ENCODE measurements at regions of chr2 and their contacts with region 1.

Region 1: DNA sequence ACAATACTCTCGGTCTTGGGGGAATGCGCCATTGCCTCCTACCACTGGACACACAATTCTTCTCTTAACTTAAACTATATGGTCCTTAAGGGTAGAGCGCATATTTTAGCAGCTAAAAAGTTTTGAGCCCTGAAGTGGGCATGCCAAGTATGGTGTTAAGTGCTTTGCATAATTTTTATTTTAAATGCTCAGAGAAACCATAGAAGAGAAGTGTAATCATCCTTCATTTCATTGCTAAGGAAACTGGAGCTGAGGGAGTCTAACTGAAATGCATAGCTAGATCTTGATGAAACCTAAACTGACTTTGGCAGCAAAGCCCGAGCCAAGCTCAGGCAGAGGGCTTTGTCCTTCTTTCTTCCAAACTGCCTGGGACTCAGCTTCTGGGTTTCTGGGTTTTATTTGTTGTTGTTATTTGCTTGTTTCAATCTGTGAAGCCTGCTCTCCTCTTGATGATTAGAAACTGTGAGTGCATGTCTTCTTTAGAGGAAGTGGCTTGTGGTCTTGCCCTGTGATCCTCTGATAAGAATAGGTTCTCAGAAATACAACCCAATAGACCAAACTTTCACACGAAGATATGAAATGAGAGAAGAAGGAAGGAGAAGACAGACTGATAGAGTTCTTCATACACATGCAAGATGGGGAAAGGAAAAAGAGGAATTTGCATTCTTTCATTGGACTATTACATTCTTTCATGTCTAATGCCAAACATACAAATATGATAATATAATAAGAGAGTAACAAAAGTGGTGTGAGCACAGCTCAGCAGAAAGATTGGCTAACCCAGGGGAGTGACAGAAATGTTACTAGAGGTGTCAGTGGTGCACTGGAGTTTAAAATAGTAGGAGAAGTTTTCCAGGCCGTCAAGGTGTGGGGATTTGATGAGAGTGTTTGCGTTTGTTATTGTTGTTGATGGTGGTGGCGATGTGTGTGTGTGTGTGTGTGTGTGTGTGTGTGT is 7.5 kb upstream of the RNF144A start:
- DNase-seq: peak; percentile 59
- H3K4me3 Mint-ChIP-seq: peak overlapping the region; percentile 66
- H3K27ac Mint-ChIP-seq: peak overlapping the region; percentile 83
- H3K4me1 Mint-ChIP-seq: peaks cover 90% of the 10 kb centered on the region
- H3K27me3 Mint-ChIP-seq: peaks cover 7% of the 10 kb centered on the region

Region 2: DNA sequence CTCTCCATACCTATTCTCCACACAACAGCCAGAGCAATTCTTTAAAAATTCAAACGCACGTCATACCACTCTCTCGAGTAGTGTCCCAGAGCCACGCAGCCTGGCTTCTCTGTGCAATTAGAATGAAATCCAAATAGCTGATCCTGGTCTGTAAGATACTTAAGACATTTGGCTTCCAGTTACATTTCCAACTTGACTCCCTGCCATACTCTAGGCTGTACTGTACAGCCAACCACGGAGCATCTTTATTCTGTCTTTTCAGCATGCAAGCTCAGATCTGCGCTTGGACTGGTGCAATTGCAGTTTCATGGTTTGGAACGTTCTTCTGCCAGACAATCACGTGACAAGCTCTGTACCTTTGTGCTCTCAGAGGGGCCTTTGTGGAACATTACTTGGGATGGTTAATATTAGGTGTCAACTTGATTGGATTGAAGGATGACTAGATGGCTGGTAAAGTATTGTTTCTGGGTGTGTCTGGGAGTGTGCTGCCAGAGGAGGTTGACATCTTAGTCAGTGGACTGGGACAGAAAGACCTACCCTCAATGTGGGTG is 891.9 kb before region 1 on chr2:
- intact Hi-C with region 1: no loop called
- DNase-seq: no peak
- H3K4me3 Mint-ChIP-seq: no peak overlapping the region
- H3K27ac Mint-ChIP-seq: no peak overlapping the region
- H3K4me1 Mint-ChIP-seq: no peaks in the 10 kb centered on the region
- H3K27me3 Mint-ChIP-seq: no peaks in the 10 kb centered on the region

Region 3: DNA sequence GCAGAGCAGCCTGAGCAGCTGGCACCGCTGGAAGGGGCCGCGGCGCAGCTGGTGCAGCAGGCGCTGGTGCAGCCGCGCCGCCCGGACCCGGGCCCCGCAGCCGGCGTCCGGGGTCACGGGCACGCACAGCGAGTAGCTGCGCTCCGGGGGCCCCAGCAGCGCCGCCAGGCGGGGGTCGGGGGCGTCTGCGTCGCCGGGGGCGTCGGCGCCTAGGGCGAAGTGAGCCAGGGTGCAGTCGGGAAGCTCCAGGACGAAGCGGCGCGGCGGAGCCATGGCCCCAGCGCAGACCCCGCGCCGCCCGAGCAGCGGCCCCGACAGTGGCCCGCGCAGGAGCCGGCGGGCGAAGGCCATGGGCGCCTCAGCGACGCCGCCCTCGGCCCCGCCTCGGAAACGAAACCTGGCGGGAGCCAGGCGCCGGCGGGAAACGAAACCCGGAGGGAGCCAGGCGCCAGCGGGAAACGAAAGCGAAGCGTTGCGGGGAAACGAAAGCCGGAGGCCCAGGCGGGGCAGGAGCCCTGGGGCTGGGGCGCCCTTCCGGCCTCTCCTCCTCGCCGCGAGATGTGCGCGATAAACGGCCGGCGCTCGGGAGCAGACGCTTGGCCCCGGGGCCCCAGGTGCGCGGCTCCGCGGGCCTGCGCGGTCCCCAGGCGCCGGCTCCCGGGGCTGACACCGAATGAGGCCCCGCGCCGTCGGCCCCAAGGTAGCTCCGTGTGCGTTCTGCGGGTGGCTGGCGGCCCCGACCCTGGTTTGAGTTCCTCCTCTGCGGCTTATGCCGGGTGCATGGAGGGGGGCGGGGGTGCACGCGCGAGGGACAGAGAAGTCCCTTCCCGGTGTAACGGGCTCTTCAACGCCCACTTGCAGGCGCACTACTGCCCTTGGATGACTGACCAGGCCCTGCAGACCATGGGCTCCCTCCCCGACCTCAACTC is 44.1 kb before region 1 on chr2 and contains the start of gene CMPK2:
- intact Hi-C with region 1: loop called (anchors 2 kb)
- DNase-seq: peak; percentile 90
- H3K4me3 Mint-ChIP-seq: peak within 1 kb of the TSS; percentile 99
- H3K27ac Mint-ChIP-seq: peak within 1 kb of the TSS; percentile 99
- H3K4me1 Mint-ChIP-seq: peaks cover 57% of the 10 kb centered on the region
- H3K27me3 Mint-ChIP-seq: no peaks in the 10 kb centered on the region
- total RNA-seq, gene CMPK2: 4.1 and 7.4 TPM in 2 replicates

Region 4: GRCh38 chr2:6946722-6947121 is 37.0 kb after region 1 on chr2:
- intact Hi-C with region 1: loop called (anchors 2 kb)
- DNase-seq: no peak
- H3K4me3 Mint-ChIP-seq: no peak overlapping the region
- H3K27ac Mint-ChIP-seq: no peak overlapping the region
- H3K4me1 Mint-ChIP-seq: peaks cover 59% of the 10 kb centered on the region
- H3K27me3 Mint-ChIP-seq: no peaks in the 10 kb centered on the region

Measured in activated T-helper 1 cell treated with anti-CD3 and anti-CD28 coated beads, Interleukin-12 subunit alpha, Interleukin-12 subunit beta, Interleukin-2, Interleukin-4 antibody, amounts not matched to agents 30 ng/mL and 10 ng/mL and 1 ng/mL, durations not matched to agents 14 hours and 24 hours and 36 hours (primary cell).